Right cardiac atrium (tissue), 5 donors: ENCODE measurements at regions of chr6 and their contacts with region 1.

Region 1: GRCh38 chr6:5471044-5471443 is 209.7 kb downstream of the FARS2 start:
- DNase-seq: peak; percentile 40 to 84 (median 76)
- ATAC-seq: peak; percentile 77 to 83
- H3K4me3 ChIP-seq: no peak overlapping the region
- H3K27ac ChIP-seq: no peak overlapping the region
- H3K4me1 ChIP-seq: peaks cover 4% of the 10 kb centered on the region
- H3K27me3 ChIP-seq: no peaks in the 10 kb centered on the region

Region 2: GRCh38 chr6:4889701-4890100 is 581.3 kb before region 1 on chr6:
- intact Hi-C with region 1: no loop called
- DNase-seq: peak in 1 of 3 donors; percentile 54
- ATAC-seq: peak; percentile 24 to 84
- H3K4me3 ChIP-seq: no peak overlapping the region
- H3K27ac ChIP-seq: no peak overlapping the region
- H3K4me1 ChIP-seq: no peaks in the 10 kb centered on the region
- H3K27me3 ChIP-seq: no peaks in the 10 kb centered on the region

Region 3: DNA sequence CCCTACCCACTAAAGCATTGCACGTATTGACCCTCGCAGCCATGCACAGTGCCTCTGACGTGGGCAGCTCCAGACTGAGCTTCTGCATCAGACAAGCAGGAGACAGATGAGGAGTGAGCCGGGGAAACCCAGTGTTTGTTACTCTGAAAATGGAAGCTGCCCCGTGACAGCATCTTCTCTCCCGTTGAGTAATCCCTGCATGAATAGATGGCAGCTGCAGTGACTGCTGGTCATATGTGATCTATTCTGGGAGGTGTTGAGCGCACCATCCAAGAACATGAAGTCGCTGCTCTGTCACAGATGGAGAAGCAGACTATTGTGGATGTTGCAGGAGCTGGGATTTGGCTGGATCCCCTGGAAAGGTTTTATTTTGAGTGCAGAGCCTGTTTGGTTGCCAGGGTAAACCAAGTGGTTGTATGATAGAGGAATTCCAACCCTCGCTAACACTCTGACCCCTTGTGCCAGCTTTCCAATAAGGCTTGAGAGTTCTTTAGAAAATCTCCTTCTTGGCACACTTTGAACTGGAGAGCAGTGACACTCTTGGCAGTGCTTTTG is 293.4 kb after region 1 on chr6:
- intact Hi-C with region 1: loop called in 2 of 4 experiments (anchors 5 to 10 kb)
- DNase-seq: peak; percentile 51 to 64 (median 61)
- ATAC-seq: peak; percentile 89 to 91
- H3K4me3 ChIP-seq: no peak overlapping the region
- H3K27ac ChIP-seq: peak overlapping the region; percentile 100
- H3K4me1 ChIP-seq: peaks cover 8% of the 10 kb centered on the region
- H3K27me3 ChIP-seq: no peaks in the 10 kb centered on the region

Region 4: DNA sequence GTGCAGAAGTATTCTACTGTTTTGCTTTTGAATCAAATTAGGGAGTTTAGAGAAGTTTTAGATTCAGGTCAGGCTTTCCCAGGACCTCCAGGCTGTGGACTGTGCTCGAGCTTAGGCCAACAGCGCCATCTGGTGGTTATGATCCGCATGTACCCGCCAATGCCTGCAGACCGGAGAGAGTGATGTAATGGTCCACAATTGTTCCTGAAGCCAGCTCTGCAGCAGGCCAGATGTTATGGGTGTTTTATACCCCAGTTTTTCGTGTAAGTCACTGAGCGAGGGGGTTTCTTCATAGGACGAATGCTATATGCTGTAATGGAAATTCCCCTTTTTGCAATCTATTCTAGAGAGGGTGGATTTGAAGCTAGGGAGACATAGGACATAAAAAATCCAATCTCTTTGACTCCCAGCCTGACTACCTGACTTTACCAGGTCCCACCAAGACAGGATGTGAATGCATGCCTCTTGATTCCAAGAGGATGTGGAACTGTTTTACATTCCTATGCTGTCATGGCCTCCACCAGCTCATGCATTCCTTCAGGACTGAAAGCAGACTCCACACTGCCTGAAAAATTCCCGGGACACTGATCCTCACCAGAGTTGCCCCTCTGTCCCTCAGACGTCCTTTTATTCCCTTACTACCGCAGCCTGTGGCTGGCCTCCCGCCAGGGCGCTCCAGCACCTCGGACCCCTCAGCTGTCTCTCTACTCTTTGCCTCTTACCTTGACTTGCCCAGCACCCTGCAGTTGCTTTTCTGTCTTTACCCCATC is 1076.3 kb after region 1 on chr6:
- intact Hi-C with region 1: loop called in 1 of 4 experiments (anchors 10 kb)
- DNase-seq: peak; percentile 85 to 91 (median 90)
- ATAC-seq: peak; percentile 96 to 97
- H3K4me3 ChIP-seq: peak overlapping the region; percentile 34
- H3K27ac ChIP-seq: no peak overlapping the region
- H3K4me1 ChIP-seq: no peaks in the 10 kb centered on the region
- H3K27me3 ChIP-seq: no peaks in the 10 kb centered on the region